ENCODE measurements at regions of chr1 and their contacts with region 1.

Region 1: GRCh38 chr1:156383023-156383422 is 14.0 kb downstream of the RHBG start:
- DNase-seq: peak; percentile 92

Region 2: DNA sequence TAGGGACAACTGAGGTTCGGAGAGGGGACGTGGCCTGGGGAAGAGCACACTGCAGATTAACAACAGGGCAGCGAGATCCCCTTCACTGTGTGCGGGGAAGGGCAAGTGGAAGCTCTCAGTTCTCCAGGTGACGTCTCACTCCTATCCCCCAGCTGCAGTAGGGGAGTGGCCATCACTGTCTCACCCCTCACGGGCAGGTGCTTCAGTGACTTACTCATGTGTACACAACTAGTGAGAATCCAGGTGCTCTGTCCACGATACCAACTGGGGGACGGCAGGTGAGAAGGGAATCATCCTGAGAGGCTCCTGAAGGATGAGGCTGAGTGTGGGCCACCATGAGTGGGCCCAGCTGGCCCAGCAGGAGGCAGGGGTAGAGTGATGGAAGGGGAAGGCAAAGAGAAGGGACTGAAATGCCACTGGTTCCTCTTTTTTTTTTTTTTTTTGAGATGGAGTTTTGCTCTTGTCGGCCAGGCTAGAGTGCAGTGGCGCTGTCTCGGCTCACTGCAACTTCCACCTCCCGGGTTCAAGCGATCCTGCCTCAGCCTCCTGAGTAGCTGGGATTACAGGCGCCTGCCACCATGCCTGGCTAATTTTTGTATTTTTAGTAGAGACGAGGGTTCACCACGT is 11.9 kb after region 1 on chr1:
- CTCF ChIA-PET with region 1: interaction called, 16 read pairs
- POLR2A ChIA-PET with region 1: no interaction called
- DNase-seq: no peak

Region 3: DNA sequence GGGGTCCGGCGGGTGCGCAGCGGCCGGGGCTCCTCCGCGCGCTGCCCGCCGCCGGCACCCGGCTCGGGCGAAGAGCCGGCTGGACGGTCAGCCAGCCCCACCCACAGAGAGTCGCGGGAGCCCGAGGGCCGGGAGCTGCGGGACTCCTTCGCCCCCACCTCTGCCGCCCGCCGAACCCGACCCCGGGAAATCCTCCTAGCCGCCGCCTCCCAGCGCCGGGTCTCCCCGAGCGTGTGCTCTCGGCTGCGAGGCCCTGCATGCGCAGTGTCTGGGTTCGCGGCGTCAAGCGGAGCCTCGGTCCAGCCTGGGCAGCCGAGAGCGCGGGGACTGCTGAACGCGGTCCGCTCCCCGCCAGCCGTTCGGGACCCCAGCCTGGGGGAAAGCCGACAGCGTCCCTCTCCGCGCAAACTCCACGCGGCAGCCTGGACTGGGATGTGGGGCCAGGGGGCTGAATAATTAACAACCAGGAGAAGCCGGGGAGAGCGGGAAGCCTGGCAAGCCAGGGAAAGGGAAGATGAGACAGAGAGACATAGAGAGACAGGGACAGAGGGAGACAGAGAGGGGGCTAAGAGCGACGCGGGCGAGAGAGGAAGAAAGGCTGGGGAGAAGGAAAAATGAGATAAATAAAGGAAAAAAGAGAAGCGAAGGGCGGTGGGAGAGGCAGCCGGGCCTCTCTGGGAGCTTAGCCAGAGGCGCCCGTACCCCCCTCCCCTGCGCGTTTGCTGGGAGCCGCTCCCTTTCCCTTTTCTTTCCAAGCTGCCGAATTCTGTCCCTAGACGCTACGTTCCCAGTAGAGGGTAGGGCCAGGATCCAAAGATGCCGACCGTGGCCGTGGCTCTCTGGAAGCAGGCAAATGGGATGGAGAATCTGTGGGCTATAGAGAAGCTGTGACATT is 53.4 kb after region 1 on chr1:
- CTCF ChIA-PET with region 1: interaction called, 39 read pairs
- POLR2A ChIA-PET with region 1: no interaction called
- DNase-seq: no peak

Region 4: DNA sequence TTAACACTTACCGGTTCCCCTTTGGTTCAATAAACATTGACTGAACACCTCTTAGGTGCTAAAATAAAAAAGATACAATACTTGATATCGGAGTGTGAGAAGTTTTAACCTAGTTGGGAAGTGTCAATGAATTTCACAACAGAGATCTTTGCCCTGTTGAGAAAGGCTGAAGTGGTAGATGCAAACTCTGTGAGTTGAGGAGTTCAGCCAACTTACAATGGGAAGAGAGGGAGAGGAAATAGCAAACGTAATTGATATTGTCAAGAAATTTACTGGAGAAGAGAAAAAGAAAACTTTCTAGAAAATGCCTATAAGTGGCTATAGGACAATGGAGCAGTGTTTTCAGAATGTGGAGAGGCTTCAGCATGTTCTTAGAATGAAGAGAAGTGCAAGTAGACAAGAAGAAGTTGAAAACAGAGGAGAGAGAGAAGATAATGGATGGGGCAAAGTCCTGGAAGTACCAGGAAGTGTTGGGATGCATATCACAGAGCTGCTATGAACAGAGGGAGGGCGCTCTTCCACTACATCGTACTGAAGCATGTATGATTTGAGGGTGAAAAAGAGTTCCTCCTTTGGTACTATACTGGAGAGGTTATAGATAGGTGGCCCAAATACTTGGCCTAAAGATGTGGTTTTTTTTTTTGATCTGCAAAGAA is 68.6 kb after region 1 on chr1:
- CTCF ChIA-PET with region 1: interaction called, 125 read pairs
- POLR2A ChIA-PET with region 1: interaction called, 3 read pairs
- DNase-seq: no peak